Cardiac septum (tissue), 1 donor: ENCODE measurements at regions of chr1 and their contacts with region 1.

Region 1: DNA sequence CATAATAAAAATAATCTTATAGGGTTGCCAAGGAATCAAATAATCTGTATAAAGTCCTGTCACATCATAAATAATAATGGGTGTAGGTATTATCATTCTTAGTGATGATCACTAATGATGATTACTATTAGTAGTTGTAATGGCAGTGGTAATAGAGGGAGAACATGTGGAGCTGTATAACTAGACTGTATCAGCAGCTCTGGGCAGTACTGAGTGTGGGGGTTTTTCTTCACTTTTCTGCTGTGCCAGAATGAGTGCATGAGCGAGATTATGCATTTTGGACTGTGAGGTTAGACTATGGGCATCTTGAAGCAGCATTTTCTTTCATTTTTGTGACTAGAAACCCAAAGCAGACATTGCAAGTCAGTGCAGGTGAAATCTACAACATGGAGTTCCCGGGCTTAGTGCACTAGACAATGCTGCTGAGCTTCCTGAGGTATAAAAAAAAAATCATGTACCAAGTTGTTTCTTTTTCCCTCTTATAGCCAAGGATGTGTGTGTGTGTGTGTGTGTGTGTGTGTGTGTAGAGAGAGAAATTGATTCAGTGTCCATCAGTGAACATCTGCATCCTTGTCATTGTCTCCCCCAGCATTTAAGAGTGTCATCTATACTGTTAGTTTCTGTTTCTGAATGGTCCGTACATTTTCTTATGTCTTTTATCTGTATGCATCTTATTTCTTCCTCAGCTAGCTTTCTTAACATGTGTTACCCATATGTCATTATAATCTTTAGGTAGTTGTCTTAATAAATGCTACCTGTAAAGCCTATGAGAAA is 86.6 kb downstream of the GIPC2 start:
- DNase-seq: no peak

Region 2: DNA sequence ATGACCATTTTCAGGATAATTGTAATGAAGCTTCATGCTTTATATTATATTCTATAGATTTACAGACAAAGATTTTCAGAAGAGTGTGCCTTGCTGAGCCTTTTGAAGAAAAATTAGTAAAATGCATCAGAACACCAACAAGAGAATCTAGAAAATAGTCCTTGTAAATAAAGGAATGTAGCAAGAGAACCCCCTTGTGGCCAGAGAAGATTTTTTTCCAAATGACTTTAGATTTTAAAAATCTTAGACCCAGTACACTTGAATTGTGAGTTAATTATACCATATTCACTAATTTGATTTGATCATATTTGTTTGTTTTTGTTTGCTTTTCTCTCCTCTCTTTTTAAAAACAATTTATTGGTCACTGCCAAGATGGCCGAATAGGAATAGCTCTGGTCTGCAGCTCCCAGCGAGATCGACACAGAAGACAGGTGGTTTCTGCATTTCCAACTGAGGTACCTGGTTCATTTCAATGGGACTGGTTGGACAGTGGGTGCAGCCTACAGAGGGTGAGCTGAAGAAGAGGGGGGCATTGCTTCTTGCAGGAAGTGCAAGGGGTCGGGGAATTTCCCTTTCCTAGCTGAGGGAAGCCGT is 475.1 kb after region 1 on chr1:
- intact Hi-C with region 1: loop called (anchors 5 kb)
- DNase-seq: no peak

Region 3: DNA sequence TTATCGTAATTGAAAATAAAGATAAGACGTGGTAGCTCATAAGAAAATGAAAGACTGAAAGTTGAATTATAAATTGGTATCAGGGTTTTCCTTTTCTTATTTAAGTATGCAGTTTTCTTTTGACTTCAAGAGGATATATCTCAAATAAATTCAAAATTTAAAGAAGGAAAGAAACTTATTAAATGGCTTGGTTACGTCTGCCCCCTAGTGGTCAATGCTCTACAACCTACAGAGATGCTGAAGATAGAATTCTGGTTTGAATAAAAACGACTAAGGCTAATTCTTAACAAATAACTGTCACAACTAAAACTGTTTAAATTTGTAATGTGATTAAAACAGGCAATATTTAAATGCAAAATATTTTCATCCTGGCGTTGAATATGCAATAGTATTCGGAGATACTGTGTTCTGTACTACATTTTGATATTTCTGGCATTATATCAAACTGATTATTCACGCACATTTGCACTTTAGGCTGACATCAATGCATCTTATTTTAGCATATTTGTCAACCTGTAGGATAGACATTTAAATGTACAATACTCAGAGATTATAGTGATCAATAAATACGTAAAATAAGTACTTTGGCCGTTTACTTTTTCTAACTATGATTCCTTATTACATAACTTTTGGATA is 544.1 kb after region 1 on chr1:
- intact Hi-C with region 1: loop called (anchors 5 kb)
- DNase-seq: no peak